HEK293T (cell line): ENCODE measurements at regions of chr11 and their contacts with region 1.

Region 1: GRCh38 chr11:62427630-62428233 is 8.9 kb downstream of the SCGB1A1 start:
- DNase-seq: no peak

Region 2: DNA sequence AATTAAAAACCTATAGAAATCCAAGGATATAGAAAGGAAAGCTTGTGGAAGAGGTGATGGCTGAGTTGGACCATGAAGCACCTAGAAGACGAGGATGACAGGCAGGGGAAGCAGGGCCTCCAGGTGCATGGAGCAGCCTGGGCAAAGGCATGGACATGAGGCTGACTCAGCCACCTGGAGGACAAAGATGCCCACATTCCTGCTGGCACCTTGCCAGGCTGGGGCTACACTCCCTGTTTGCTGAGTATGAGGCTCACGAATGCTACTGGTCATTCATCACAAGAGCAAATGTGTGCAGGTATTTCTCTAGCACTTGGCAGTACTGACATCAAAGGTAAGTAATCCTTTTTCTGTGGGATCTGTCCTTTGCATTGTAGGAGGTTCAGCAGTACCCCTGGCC is 226.4 kb before region 1 on chr11:
- CTCF ChIA-PET with region 1: no interaction called
- POLR2A ChIA-PET with region 1: no interaction called
- DNase-seq: no peak

Region 3: GRCh38 chr11:62413060-62413696 is 14.6 kb before region 1 on chr11:
- CTCF ChIA-PET with region 1: interaction called, 10 read pairs
- POLR2A ChIA-PET with region 1: no interaction called
- DNase-seq: no peak

Region 4: GRCh38 chr11:62556108-62556871 is 128.6 kb after region 1 on chr11:
- CTCF ChIA-PET with region 1: interaction called, 12 read pairs
- POLR2A ChIA-PET with region 1: interaction called, 4 read pairs
- DNase-seq: peak; percentile 77